ENCODE measurements at regions of chr10 and their contacts with region 1.

Region 1: GRCh38 chr10:119750391-119751230 is 24.8 kb downstream of the INPP5F start:
- DNase-seq: peak; percentile 69
- H3K4me3 ChIP-seq: no peak overlapping the region
- H3K27ac ChIP-seq: no peak overlapping the region
- H3K4me1 ChIP-seq: no peaks in the 10 kb centered on the region
- H3K27me3 ChIP-seq: no peaks in the 10 kb centered on the region
- CTCF ChIP-seq: peak; percentile 97 to 98

Region 2: GRCh38 chr10:119608316-119609155 is 142.1 kb before region 1 on chr10:
- CTCF ChIA-PET with region 1: interaction called, 6 read pairs
- dilution Hi-C with region 1: no loop called
- in situ Hi-C with region 1: no loop called
- intact Hi-C with region 1: loop called (anchors 1 kb)
- DNase-seq: peak; percentile 38
- H3K4me3 ChIP-seq: no peak overlapping the region
- H3K27ac ChIP-seq: no peak overlapping the region
- H3K4me1 ChIP-seq: no peaks in the 10 kb centered on the region
- H3K27me3 ChIP-seq: no peaks in the 10 kb centered on the region
- CTCF ChIP-seq: peak; percentile 74 to 90

Region 3: GRCh38 chr10:119686439-119687191 is 64.0 kb before region 1 on chr10:
- CTCF ChIA-PET with region 1: interaction called, 8 read pairs
- dilution Hi-C with region 1: loop called (anchors 5 kb)
- in situ Hi-C with region 1: no loop called
- intact Hi-C with region 1: loop called (anchors 1 kb)
- DNase-seq: peak; percentile 98
- H3K4me3 ChIP-seq: peak overlapping the region in 1 of 3 experiments; percentile 28
- H3K27ac ChIP-seq: peak overlapping the region; percentile 38
- H3K4me1 ChIP-seq: peaks cover 35% of the 10 kb centered on the region
- H3K27me3 ChIP-seq: no peaks in the 10 kb centered on the region
- CTCF ChIP-seq: peak; percentile 76 to 85

Region 4: GRCh38 chr10:119834188-119834587 is 83.6 kb after region 1 on chr10:
- CTCF ChIA-PET with region 1: no interaction called
- dilution Hi-C with region 1: no loop called
- in situ Hi-C with region 1: loop called in 1 of 2 experiments (anchors 10 kb)
- intact Hi-C with region 1: no loop called
- DNase-seq: peak; percentile 64
- H3K4me3 ChIP-seq: no peak overlapping the region
- H3K27ac ChIP-seq: peak overlapping the region; percentile 18
- H3K4me1 ChIP-seq: no peaks in the 10 kb centered on the region
- H3K27me3 ChIP-seq: no peaks in the 10 kb centered on the region
- CTCF ChIP-seq: no peak

Region 5: DNA sequence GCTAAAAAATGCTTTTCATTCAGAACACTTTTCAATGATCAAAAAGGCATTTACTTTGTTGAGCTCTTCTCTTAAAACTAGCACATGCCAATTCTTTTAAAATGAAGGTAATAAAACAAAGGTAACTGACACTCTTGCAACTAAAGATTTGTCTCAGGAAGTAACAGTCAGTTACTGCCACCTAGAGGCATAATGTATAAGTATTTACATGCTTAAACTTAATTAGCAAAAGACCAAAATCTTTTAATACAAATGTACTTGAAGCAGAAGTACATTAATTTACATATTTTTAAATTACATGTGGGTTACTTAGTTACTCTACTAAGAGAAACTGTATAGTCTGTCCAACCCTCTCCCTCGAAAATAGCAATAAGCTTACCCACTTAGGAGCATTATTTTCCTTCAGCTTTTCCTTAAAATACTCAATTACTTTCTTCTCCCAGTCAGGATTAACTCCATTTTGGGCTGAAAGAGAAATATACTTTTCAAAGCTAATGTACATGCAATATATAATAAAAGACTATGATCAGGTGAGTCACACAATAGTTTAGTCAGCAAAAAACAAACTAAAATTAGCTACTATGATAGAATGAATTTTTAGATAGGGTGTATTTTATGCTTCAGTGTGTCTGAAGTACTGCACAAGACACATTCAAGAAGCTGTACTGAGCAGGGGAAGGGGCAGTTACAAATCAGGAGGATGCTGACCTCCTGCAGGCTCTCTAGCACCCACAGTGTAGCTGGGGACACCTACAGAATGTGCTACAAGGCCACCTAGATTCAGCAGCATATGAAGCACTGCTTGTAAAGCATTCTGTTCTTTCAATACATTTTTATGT is 109.0 kb after region 1 on chr10:
- CTCF ChIA-PET with region 1: interaction called, 8 read pairs
- dilution Hi-C with region 1: no loop called
- in situ Hi-C with region 1: loop called in 1 of 2 experiments (anchors 10 kb)
- intact Hi-C with region 1: loop called (anchors 1 kb)
- DNase-seq: peak; percentile 27
- H3K4me3 ChIP-seq: no peak overlapping the region
- H3K27ac ChIP-seq: no peak overlapping the region
- H3K4me1 ChIP-seq: no peaks in the 10 kb centered on the region
- H3K27me3 ChIP-seq: no peaks in the 10 kb centered on the region
- CTCF ChIP-seq: peak; percentile 47 to 60

Region 6: GRCh38 chr10:119919826-119920225 is 169.2 kb after region 1 on chr10:
- CTCF ChIA-PET with region 1: no interaction called
- dilution Hi-C with region 1: no loop called
- in situ Hi-C with region 1: no loop called
- intact Hi-C with region 1: loop called (anchors 2 kb)
- DNase-seq: no peak
- H3K4me3 ChIP-seq: no peak overlapping the region
- H3K27ac ChIP-seq: no peak overlapping the region
- H3K4me1 ChIP-seq: peaks cover 2% of the 10 kb centered on the region
- H3K27me3 ChIP-seq: no peaks in the 10 kb centered on the region
- CTCF ChIP-seq: no peak

Region 7: DNA sequence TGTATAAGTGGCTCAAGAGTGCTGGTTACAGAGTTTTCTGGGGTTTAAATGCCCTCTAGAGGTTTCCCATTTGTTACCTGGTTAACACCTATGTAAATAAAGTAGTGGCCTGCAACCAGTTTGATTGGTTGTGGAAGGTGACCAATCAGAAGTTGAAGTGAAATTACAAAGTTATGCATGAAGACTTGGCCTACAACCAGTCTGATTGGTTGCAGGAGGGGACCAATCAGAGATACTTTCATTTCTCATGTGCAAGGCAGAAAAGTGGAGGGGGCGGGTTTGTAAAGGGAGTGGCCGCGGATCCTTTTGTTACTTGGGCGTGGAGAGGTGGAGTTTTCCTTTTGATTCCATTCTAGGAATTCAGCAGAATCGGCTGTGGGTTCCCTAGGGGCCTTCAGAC is 222.7 kb after region 1 on chr10:
- CTCF ChIA-PET with region 1: no interaction called
- dilution Hi-C with region 1: no loop called
- in situ Hi-C with region 1: no loop called
- intact Hi-C with region 1: no loop called
- DNase-seq: peak; percentile 5
- H3K4me3 ChIP-seq: no peak overlapping the region
- H3K27ac ChIP-seq: no peak overlapping the region
- H3K4me1 ChIP-seq: no peaks in the 10 kb centered on the region
- H3K27me3 ChIP-seq: no peaks in the 10 kb centered on the region
- CTCF ChIP-seq: no peak

Region 8: DNA sequence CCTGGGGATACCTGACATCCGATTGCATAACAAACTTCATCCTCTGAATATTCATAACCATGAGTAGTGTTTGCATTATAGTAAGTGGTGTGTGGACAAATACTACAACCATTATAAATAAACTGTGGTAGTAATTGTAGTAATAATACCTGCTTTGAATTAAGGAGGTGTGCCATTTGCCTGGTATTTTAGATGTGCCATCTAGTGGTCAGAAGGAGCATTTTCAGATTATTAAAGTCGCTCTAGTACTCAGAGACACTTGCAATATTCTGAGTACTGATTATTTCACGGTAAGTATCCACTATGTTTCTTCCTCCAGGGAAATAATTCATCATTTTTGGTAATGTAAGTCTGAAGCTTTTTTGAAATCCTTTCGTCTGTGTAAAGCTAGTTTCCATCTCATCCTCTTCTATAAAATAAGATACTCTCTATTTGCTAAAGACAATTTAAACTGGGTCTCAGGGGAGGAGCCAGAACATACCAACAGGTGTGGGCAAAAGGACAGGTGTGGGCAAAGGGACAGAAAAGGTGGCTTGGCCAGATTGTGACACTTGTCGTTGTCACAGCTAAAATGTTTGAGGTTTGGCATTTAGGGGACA is 985.3 kb after region 1 on chr10:
- CTCF ChIA-PET with region 1: no interaction called
- dilution Hi-C with region 1: no loop called
- in situ Hi-C with region 1: no loop called
- intact Hi-C with region 1: loop called (anchors 5 kb)
- DNase-seq: peak; percentile 7
- H3K4me3 ChIP-seq: no peak overlapping the region
- H3K27ac ChIP-seq: no peak overlapping the region
- H3K4me1 ChIP-seq: peaks cover 10% of the 10 kb centered on the region
- H3K27me3 ChIP-seq: peaks cover 6% of the 10 kb centered on the region
- CTCF ChIP-seq: peak; percentile 76 to 80